ENCODE measurements at regions of chr20 and their contacts with region 1.

Region 1: GRCh38 chr20:34768096-34768495 is 57.4 kb downstream of the NCOA6 start:
- DNase-seq: peak; percentile 33
- H3K4me3 ChIP-seq: no peak overlapping the region
- H3K27ac ChIP-seq: no peak overlapping the region
- H3K27me3 ChIP-seq: no peaks in the 10 kb centered on the region
- CTCF ChIP-seq: no peak

Region 2: DNA sequence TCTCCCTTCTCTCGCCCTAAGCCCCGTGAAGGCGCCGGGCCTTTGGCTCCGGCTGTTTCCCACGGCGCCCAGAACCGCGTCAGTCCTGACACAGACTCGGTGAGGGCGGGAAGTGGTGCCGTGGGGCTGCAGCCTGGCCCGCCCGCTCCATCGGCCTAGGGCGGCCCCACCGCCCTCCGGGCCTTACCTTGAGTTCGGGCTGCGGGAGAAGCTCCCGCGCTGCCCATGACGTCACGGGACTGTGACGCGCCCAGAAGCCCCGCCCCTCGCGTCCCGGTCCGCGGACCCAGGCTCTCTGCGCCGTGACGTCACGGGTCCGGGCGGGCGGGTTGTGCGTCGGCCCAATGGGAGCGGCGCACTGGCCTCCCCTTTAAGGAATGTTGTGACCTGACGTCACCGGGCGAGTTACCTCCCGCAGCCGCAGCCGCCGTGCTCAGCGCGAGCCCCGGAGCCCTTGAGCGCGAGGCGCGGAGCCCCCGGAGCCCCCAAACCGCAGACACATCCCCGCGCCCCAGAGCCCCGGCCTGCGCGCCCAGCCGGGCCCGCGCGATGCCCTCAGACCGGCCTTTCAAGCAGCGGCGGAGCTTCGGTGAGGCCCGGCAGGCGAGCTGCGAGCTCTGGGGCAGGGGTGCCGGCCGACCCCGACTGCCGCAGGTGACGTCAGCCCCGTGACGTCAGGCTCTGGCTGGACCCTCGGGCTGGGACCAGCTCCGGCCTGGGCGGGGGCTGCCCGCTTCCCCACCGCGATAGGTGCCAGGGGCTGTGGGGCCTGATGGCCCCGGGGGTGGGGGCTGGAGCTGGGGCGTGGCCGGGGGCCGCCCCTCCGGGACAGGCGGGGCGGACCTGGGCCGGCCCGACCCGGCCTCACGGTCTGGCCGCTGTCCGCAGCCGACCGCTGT is 209.5 kb before region 1 on chr20 and contains the start of gene MAP1LC3A:
- CTCF ChIA-PET with region 1: interaction called, 22 read pairs
- POLR2A ChIA-PET with region 1: no interaction called
- DNase-seq: peak; percentile 88
- H3K4me3 ChIP-seq: peak within 1 kb of the TSS; percentile 71
- H3K27ac ChIP-seq: peak within 1 kb of the TSS; percentile 65
- H3K27me3 ChIP-seq: no peaks in the 10 kb centered on the region
- CTCF ChIP-seq: no peak
- polyA plus RNA-seq, gene MAP1LC3A: 15.9 and 26.7 TPM in 2 replicates

Region 3: GRCh38 chr20:34744847-34745246 is 23.2 kb before region 1 on chr20:
- CTCF ChIA-PET with region 1: interaction called, 11 read pairs
- POLR2A ChIA-PET with region 1: no interaction called
- DNase-seq: no peak
- H3K4me3 ChIP-seq: no peak overlapping the region
- H3K27ac ChIP-seq: no peak overlapping the region
- H3K27me3 ChIP-seq: no peaks in the 10 kb centered on the region
- CTCF ChIP-seq: no peak

Region 4: DNA sequence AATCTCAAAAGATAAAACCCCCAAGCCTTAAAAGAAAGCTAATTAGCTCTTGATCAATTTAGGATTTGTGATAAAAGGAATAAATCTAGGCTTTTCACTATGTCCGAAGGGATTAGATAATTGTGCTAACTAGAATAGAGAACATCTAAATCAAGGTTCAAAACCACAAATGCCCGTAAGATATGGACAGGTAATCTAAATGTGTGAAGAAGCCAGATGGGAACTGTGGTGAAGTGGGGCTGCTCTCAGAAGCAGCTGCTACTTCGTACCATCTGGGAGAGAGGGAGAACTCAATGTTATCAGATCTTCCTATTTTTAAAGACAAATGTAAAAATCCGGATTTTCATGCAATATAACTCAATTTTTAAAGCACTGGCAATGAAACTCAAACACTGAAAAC is 13.1 kb after region 1 on chr20:
- CTCF ChIA-PET with region 1: interaction called, 27 read pairs
- POLR2A ChIA-PET with region 1: no interaction called
- DNase-seq: no peak
- H3K4me3 ChIP-seq: no peak overlapping the region
- H3K27ac ChIP-seq: no peak overlapping the region
- H3K27me3 ChIP-seq: no peaks in the 10 kb centered on the region
- CTCF ChIP-seq: no peak

Region 5: GRCh38 chr20:34955232-34956040 is 187.3 kb after region 1 on chr20 and contains the starts of genes GSS and MYH7B:
- CTCF ChIA-PET with region 1: no interaction called
- POLR2A ChIA-PET with region 1: no interaction called
- DNase-seq: peak; percentile 91
- H3K4me3 ChIP-seq: peak within 1 kb of the TSS; percentile 80
- H3K27ac ChIP-seq: peak within 1 kb of the TSS; percentile 92
- H3K27me3 ChIP-seq: no peaks in the 10 kb centered on the region
- CTCF ChIP-seq: peak; percentile 55
- polyA plus RNA-seq, gene GSS: 71.6 and 77.4 TPM in 2 replicates
- polyA plus RNA-seq, gene MYH7B: 0.02 and 0.20 TPM in 2 replicates

Measured in AG04450 (cell line).